Adrenal gland (tissue), 19 donors: ENCODE measurements at regions of chr9 and their contacts with region 1.

Region 1: GRCh38 chr9:89602978-89603766 is 1.6 kb upstream of the GADD45G start:
- DNase-seq: peak; percentile 90 to 97 (median 95)
- H3K4me3 ChIP-seq: peak overlapping the region in 2 of 4 donors; percentile 44 to 56
- H3K27ac ChIP-seq: peak overlapping the region; percentile 31 to 97 (median 89)
- H3K4me1 ChIP-seq: peaks cover 18 to 35% of the 10 kb centered on the region in 2 donors
- H3K27me3 ChIP-seq: no peaks in the 10 kb centered on the region
- CTCF ChIP-seq: peak; percentile 71 to 93 (median 88)
- POLR2A ChIP-seq: no peak

Region 2: DNA sequence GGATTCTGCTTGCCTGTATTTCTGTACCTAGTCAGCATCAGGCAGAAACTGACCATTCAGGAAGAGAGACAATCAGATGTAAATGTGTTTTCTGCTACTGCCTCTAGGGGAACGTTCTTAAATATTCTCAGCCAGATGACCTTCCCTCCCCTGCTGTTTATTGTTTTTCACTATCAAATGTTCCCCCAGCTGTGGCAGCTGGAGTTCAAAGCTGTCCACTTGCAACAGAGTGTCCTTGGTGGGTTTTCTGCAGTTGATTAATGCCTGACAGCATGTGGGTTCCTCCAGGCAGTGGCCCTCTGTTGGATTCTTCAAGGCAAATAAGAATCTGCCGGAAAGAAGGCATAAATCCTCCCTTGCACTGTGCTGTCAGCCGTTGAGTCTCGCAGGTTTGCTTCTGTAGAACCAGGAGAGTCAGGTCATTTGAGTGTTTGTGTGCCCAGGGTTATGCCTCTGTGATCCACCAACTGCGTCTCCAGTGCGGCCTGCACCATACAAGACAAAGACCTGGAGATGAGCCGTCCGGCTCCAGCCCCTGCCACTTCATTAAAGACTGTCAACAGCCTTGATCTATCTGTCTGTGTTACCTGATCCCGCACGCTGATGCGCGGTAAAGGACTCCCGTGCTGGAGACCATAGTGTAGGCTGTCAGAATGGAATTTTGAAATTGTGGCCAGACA is 205.0 kb after region 1 on chr9:
- intact Hi-C with region 1: loop called in 1 of 2 experiments (anchors 10 kb)
- DNase-seq: peak; percentile 66 to 91 (median 87)
- H3K4me3 ChIP-seq: no peak overlapping the region
- H3K27ac ChIP-seq: peak overlapping the region; percentile 37 to 95 (median 89)
- H3K4me1 ChIP-seq: peaks cover 18 to 24% of the 10 kb centered on the region in 2 donors
- H3K27me3 ChIP-seq: no peaks in the 10 kb centered on the region
- CTCF ChIP-seq: peak; percentile 32 to 74 (median 62)
- POLR2A ChIP-seq: peak in 1 of 2 donors; percentile 2

Region 3: DNA sequence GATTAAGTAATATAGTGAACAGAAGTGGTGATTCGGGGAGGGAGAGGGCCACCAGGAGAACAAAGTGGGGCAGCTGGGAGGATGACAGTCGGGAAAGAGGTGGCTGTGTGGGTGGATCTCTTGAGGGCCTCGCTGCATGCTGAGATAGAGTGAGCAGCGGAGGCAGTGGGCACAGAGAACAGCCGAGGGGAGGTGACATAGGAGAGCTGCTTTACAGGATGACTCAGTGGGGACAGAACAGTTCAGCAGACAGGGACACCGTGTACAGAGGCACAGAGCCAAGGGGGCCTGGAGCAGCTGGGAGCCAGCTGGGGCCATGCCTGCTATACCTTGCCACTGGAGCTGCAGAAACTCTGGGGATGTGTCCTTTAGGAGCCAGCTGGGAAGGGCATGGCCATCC is 275.5 kb after region 1 on chr9:
- intact Hi-C with region 1: no loop called
- DNase-seq: peak; percentile 80 to 98 (median 94)
- H3K4me3 ChIP-seq: no peak overlapping the region
- H3K27ac ChIP-seq: peak overlapping the region in 4 of 5 donors; percentile 46 to 74 (median 63)
- H3K4me1 ChIP-seq: peaks cover 13 to 29% of the 10 kb centered on the region in 2 donors
- H3K27me3 ChIP-seq: no peaks in the 10 kb centered on the region
- CTCF ChIP-seq: no peak
- POLR2A ChIP-seq: peak in 1 of 2 donors; percentile 66

Region 4: GRCh38 chr9:89923961-89924504 is 320.9 kb after region 1 on chr9:
- intact Hi-C with region 1: loop called (anchors 5 kb)
- DNase-seq: peak; percentile 87 to 97 (median 93)
- H3K4me3 ChIP-seq: no peak overlapping the region
- H3K27ac ChIP-seq: peak overlapping the region in 4 of 5 donors; percentile 54 to 75 (median 71)
- H3K4me1 ChIP-seq: peaks cover 16 to 24% of the 10 kb centered on the region in 2 donors
- H3K27me3 ChIP-seq: no peaks in the 10 kb centered on the region
- CTCF ChIP-seq: peak in 5 of 6 experiments; percentile 45 to 75 (median 71)
- POLR2A ChIP-seq: peak in 1 of 2 donors; percentile 63

Region 5: DNA sequence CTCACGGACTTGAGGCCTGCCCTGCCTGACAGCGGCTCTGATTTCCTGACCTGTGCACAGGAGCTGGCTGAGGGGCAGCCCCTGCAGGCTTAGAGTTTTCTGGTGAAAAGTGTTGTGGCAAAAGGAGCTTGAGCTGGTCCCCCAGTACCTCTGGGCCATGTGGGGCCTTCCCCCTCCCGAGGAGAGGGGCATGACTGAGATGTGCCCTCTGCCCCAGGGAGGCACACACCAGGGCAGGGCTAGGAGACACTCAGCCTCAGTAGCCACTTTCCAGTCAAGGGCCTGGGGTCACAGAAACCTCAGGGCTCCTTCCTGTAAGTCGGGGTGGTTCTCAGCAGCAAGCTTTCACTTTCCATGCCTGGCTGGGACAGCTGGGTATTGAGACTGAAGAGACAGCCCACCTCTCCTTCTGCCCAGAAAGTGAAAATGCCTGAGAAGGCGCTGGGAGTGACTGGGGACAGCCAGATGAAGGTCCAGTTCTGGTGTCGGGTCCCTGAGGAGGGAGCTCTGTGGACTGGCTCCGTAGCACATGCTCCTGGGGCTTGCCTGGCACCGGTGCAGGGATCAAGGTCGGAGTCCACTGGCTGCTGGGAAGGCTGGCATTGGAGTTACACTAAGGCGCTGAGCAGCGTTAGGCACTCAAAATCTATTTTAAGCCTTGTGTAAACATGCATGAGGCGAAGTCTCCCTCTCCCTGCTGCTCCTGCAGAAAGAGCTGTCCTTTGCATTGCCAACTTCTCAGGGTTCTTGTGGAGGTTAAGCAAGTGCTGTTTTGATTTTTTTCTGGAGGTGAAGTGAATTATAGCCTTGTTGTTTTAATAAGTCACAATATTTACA is 396.6 kb after region 1 on chr9:
- intact Hi-C with region 1: loop called in 1 of 2 experiments (anchors 10 kb)
- DNase-seq: peak; percentile 79 to 95 (median 91)
- H3K4me3 ChIP-seq: peak overlapping the region in 1 of 4 donors; percentile 36
- H3K27ac ChIP-seq: peak overlapping the region; percentile 87 to 95 (median 93)
- H3K4me1 ChIP-seq: peaks cover 46 to 54% of the 10 kb centered on the region in 2 donors
- H3K27me3 ChIP-seq: no peaks in the 10 kb centered on the region
- CTCF ChIP-seq: peak in 1 of 6 experiments; percentile 12
- POLR2A ChIP-seq: peak in 1 of 2 donors; percentile 71